ENCODE measurements at regions of chr2 and their contacts with region 1.

Region 1: DNA sequence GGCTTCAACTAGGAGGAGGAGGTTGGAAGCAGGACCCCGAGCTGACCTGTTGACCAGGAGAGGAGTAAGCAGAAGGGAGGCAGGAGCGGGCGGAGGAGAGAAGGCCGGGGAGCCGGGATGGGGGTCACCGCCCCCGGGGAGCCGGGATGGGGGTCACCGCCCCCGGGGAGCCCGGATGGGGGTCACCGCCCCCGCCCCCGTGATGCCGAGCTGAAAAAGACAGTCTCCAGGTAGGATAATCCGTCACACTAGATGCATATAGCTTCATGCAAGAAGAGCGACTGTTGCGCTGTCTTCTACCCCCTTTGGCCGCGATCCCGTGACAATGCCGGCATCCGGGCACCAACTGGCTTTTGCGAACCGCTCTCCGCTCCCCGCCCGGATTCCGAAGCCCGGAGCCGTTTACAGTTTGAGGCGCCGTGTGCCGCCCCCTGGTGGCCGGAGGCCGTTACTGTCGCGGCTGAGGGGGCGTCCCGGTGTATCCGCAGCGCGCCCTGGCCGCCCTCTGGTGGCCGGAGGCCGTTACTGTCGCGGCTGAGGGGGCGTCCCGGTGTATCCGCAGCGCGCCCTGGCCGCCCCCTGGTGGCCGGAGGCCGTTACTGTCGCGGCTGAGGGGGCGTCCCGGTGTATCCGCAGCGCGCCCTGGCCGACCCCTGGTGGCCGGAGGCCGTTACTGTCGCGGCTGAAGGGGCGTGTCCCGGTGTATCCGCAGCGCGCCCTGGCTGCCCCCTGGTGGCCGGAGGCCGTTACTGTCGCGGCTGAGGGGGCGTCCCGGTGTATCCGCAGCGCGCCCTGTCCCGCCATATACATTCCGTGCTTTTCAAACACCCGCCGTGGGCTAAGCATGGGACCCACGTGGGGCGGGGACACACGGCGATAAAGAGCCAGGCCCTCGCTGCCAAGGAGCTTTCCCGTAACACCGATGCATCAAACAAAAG is 89.6 kb downstream of the ACTR3 start:
- DNase-seq: no peak

Region 2: GRCh38 chr2:113756355-113757137 is 222.9 kb before region 1 on chr2 and contains the start of gene SLC35F5:
- intact Hi-C with region 1: no loop called
- DNase-seq: peak; percentile 97
- total RNA-seq, gene SLC35F5: 66.3 TPM

Region 3: GRCh38 chr2:114056294-114057143 is 77.1 kb after region 1 on chr2:
- intact Hi-C with region 1: no loop called
- DNase-seq: no peak

Region 4: GRCh38 chr2:114089636-114090319 is 110.3 kb after region 1 on chr2:
- intact Hi-C with region 1: no loop called
- DNase-seq: no peak

Region 5: GRCh38 chr2:114543236-114543766 is 563.8 kb after region 1 on chr2:
- intact Hi-C with region 1: loop called (anchors 2 kb)
- DNase-seq: no peak